ENCODE measurements at regions of chrX and their contacts with region 1.

Region 1: GRCh38 chrX:49264460-49264859 is at the start of gene FOXP3:
- DNase-seq: no peak
- H3K4me3 ChIP-seq: no peak within 1 kb of the TSS
- H3K27ac ChIP-seq: no peak within 1 kb of the TSS
- H3K4me1 ChIP-seq: peaks cover 0 to 6% (median 4%) of the 10 kb centered on the region in 4 donors
- H3K27me3 ChIP-seq: no peaks in the 10 kb centered on the region
- CTCF ChIP-seq: no peak
- EP300 ChIP-seq: no peak
- POLR2A ChIP-seq: no peak
- total RNA-seq, gene FOXP3: not detected

Region 2: GRCh38 chrX:49191033-49191871 is 73.2 kb before region 1 on chrX:
- intact Hi-C with region 1: loop called (anchors 5 kb)
- DNase-seq: peak; percentile 97
- H3K4me3 ChIP-seq: peak overlapping the region; percentile 62 to 74 (median 69)
- H3K27ac ChIP-seq: peak overlapping the region; percentile 89 to 92 (median 90)
- H3K4me1 ChIP-seq: peaks cover 0 to 22% (median 16%) of the 10 kb centered on the region in 4 donors
- H3K27me3 ChIP-seq: no peaks in the 10 kb centered on the region
- CTCF ChIP-seq: no peak
- EP300 ChIP-seq: no peak
- POLR2A ChIP-seq: peak; percentile 15